ENCODE measurements at regions of chr2 and their contacts with region 1.

Region 1: DNA sequence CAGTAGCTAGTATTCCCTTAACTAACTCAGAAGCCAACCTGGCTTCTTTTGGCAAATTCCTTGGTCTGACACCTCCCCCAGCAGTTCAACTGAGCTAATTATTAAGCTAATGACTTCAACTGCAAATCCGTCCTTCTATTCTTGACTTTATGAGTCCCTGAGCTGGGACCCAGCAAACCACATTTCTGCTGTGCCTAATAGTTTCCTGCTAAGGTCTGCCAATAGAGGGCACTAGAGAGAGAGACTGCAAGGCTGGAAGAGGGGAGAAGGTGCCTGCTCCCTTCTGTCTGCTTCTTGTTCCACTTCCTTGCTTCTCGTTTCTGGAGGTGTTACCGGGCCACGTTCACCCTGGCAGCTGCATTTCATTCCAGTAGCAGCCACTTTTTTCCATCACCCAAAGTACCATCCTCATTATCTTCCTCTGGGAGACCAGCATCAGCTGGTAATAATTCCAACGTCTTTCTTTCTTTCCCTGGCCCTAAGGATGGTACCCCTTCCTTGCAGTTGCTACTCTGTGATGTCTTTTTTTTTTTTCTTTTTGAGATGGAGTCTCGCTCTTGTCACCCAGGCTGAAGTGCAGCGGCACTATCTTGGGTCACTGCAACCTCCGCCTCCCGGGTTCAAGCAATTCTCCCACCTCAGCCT is 352.0 kb downstream of the TNS1 start:
- DNase-seq: no peak
- H3K4me3 ChIP-seq: no peak overlapping the region
- CTCF ChIP-seq: peak; percentile 81

Region 2: DNA sequence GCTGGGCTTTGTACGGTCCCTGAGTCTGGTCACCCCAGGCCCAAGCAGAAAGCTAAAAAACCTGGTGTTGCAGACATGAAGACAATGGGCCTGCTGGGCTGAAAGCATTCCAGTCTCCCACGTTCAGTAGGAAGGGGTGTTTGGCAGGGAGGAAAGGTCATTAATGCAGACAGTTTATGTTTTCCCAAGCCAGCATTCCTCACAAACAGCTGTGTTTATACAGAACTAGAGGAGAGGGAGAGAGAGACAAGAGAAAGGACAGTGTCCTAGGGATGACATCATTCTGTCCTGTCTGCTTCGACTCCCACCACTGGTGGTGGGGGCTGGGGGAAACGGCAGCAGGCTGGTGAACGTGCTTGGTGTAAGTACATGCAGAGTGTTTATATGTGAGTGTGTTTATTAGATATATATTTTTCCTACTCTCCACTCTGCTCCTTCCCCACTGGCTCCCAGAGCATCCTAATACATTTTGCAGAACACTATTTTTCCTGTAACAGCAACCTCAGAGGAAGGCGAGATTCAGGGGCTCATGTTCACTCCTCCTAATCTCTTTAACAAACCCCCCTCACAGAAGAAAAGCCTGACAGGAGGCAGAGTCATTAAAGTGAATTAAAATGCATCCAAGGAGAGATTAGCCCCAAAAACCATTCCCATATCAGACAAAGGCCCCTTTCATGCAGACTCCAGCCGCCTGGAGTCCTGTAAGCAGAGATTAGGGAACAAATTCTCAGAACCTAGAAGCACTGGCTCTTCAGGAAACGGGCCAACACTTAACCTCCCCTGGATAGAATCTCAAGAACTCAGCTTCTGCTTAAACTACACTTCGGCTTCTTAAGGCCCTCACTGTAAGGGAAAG is 28.4 kb before region 1 on chr2:
- CTCF ChIA-PET with region 1: interaction called, 45 read pairs
- POLR2A ChIA-PET with region 1: no interaction called
- DNase-seq: peak; percentile 51
- H3K4me3 ChIP-seq: no peak overlapping the region
- CTCF ChIP-seq: no peak

Region 3: GRCh38 chr2:217632043-217632442 is 18.8 kb before region 1 on chr2:
- CTCF ChIA-PET with region 1: interaction called, 95 read pairs
- POLR2A ChIA-PET with region 1: interaction called, 3 read pairs
- DNase-seq: no peak
- H3K4me3 ChIP-seq: no peak overlapping the region
- CTCF ChIP-seq: no peak

Region 4: DNA sequence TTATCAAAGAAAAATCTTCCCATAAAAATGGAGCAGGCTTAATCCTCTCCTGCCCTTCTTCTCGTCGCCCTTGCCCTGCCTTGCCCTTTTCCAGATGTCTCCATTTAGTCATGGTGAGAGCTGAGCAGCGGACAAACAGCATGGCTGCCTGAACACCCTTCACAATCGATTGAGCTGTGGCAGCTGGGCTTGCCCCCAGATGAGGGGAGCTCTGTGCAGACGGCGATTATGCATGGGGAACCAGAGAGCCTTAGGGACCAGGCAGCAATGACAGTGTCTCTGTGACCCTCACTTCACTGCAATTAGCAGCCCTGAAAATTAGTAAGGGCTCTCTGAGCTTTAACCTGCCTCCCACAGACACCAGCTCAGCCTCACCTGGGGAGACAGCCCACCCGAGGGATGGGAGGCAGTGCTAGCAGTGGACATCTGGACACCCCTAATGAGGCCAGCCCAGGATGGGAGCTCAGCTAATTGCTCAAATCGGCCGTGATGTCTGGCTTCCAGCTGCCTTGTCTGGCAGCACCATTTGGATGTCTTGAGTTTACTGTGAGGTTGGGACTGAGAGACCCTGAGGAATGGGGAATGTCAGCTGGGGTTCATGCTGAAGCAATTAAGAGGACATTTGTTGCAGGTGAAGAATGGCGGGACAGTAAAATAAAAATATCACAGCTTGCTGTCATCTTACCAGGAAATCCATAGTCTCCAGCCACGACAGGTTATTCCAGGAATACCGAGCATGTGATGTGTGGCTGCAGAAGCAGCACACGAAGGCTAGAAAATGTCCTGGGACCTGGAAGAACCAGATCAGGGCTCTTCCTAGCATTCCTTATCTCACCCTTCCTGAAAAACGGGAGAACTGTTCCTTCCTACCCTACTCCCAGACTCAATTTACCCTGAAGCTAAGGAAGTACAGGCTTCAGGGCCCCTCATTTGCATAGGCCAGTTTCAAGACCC is 13.6 kb before region 1 on chr2:
- CTCF ChIA-PET with region 1: interaction called, 95 read pairs
- POLR2A ChIA-PET with region 1: interaction called, 3 read pairs
- DNase-seq: no peak
- H3K4me3 ChIP-seq: no peak overlapping the region
- CTCF ChIP-seq: no peak

Region 5: DNA sequence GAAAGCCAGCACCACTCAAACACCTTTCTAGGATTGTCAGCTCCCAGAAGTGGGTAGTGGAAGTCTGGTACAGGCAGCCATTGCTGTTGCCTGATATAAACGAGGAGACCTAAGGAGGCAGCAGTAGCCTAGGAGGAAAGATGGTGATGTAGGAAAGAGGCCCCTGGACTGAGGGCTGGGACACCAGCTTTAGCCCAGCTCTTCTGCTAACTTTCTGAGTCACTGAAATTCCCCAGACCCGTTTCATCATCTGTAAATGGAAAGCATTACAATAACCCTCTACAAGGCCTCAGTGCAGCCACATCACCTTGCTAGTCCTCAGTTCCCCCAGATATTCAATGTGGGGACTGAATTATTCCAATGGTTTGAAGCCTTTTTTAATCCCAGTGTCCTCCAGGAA is 15.5 kb after region 1 on chr2:
- CTCF ChIA-PET with region 1: interaction called, 26 read pairs
- POLR2A ChIA-PET with region 1: no interaction called
- DNase-seq: no peak
- H3K4me3 ChIP-seq: no peak overlapping the region
- CTCF ChIP-seq: no peak

Region 6: DNA sequence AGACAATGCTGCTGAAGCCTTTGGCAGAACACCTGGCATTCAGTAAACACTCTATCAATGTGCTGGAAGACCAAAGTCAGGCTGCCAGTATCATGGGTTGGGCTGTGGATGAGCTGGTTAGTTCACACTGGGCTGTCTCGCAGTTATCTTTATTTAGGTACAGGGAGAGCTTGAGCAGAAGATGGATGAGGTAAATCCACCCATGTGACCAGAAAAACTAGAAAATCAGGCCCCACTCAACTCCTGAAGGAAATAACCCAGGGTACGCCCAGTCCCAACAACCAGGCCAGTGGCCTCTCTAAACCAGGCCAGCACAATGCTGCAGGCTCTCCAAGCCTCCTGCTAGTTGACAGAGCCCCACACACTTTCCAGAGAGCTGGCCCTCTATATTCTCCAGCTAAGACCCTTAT is 21.7 kb after region 1 on chr2:
- CTCF ChIA-PET with region 1: interaction called, 26 read pairs
- POLR2A ChIA-PET with region 1: no interaction called
- DNase-seq: no peak
- H3K4me3 ChIP-seq: no peak overlapping the region
- CTCF ChIP-seq: no peak

Region 7: GRCh38 chr2:217703102-217703501 is 52.3 kb after region 1 on chr2:
- CTCF ChIA-PET with region 1: interaction called, 20 read pairs
- POLR2A ChIA-PET with region 1: no interaction called
- DNase-seq: no peak
- H3K4me3 ChIP-seq: no peak overlapping the region
- CTCF ChIP-seq: no peak

Measured in AG04449 (cell line).